Activated B cell treated with CpG ODN at 0.5 μM for 24 hours (primary cell): ENCODE measurements at regions of chr10 and their contacts with region 1.

Region 1: DNA sequence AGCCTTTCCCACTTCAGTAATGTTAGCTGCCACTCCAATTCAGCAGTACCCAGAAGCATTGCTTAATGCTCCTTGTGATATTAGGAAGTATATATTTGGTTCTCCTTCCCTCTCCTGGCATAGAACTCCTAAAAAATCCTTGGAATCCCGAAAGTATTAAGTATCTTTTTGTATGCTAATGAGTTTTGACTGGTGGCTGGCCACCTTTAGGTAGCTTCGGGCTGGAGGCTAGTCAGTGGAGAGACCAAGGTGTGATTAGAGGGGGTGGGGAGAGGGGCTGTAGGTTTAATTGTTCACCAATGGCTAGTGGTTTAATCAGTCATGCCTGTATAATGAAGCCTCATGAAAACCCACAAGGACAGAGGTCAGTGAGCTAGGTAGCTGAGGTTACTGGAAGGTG is 12.2 kb downstream of the COMTD1 start:
- DNase-seq: no peak
- ATAC-seq: no peak
- H3K4me3 Mint-ChIP-seq: no peak overlapping the region
- H3K27ac Mint-ChIP-seq: no peak overlapping the region
- H3K4me1 Mint-ChIP-seq: peaks cover 24% of the 10 kb centered on the region
- H3K27me3 Mint-ChIP-seq: no peaks in the 10 kb centered on the region
- CTCF ChIP-seq: no peak

Region 2: GRCh38 chr10:74967911-74968645 is 255.4 kb before region 1 on chr10:
- CTCF ChIA-PET with region 1: no interaction called
- POLR2A ChIA-PET with region 1: no interaction called
- intact Hi-C with region 1: no loop called
- DNase-seq: no peak
- ATAC-seq: peak; percentile 14
- H3K4me3 Mint-ChIP-seq: peak overlapping the region; percentile 65
- H3K27ac Mint-ChIP-seq: peak overlapping the region; percentile 62
- H3K4me1 Mint-ChIP-seq: peaks cover 32% of the 10 kb centered on the region
- H3K27me3 Mint-ChIP-seq: no peaks in the 10 kb centered on the region
- CTCF ChIP-seq: no peak

Region 3: GRCh38 chr10:75187961-75188426 is 35.5 kb before region 1 on chr10:
- CTCF ChIA-PET with region 1: interaction called, 4 read pairs
- POLR2A ChIA-PET with region 1: interaction called, 10 read pairs
- intact Hi-C with region 1: no loop called
- DNase-seq: no peak
- ATAC-seq: peak; percentile 78
- H3K4me3 Mint-ChIP-seq: no peak overlapping the region
- H3K27ac Mint-ChIP-seq: peak overlapping the region; percentile 30
- H3K4me1 Mint-ChIP-seq: peaks cover 5% of the 10 kb centered on the region
- H3K27me3 Mint-ChIP-seq: no peaks in the 10 kb centered on the region
- CTCF ChIP-seq: no peak